CD4-positive, alpha-beta memory T cell (primary cell): ENCODE measurements at regions of chr6 and their contacts with region 1.

Region 1: GRCh38 chr6:16514249-16514648 is 247.0 kb downstream of the ATXN1 start:
- DNase-seq: peak in 4 of 5 donors; percentile 39 to 48 (median 42)
- H3K4me3 ChIP-seq: no peak overlapping the region
- H3K4me3 Mint-ChIP-seq: peak overlapping the region in 4 of 8 donors; percentile 22 to 65 (median 34)
- H3K27ac ChIP-seq: no peak overlapping the region
- H3K27ac Mint-ChIP-seq: peak overlapping the region; percentile 49 to 95 (median 85)
- H3K4me1 ChIP-seq: peaks cover 54% of the 10 kb centered on the region
- H3K4me1 Mint-ChIP-seq: peaks cover 53 to 73% (median 65%) of the 10 kb centered on the region in 4 donors
- H3K27me3 ChIP-seq: no peaks in the 10 kb centered on the region
- H3K27me3 Mint-ChIP-seq: no peaks in the 10 kb centered on the region

Region 2: GRCh38 chr6:16257999-16258708 is 256.1 kb before region 1 on chr6:
- CTCF ChIA-PET with region 1: no interaction called
- POLR2A ChIA-PET with region 1: no interaction called
- intact Hi-C with region 1: no loop called
- DNase-seq: no peak
- H3K4me3 ChIP-seq: no peak overlapping the region
- H3K4me3 Mint-ChIP-seq: no peak overlapping the region
- H3K27ac ChIP-seq: no peak overlapping the region
- H3K27ac Mint-ChIP-seq: no peak overlapping the region
- H3K4me1 ChIP-seq: no peaks in the 10 kb centered on the region
- H3K4me1 Mint-ChIP-seq: no peaks in the 10 kb centered on the region
- H3K27me3 ChIP-seq: no peaks in the 10 kb centered on the region
- H3K27me3 Mint-ChIP-seq: peaks cover 1 to 3% of the 10 kb centered on the region in 2 donors

Region 3: DNA sequence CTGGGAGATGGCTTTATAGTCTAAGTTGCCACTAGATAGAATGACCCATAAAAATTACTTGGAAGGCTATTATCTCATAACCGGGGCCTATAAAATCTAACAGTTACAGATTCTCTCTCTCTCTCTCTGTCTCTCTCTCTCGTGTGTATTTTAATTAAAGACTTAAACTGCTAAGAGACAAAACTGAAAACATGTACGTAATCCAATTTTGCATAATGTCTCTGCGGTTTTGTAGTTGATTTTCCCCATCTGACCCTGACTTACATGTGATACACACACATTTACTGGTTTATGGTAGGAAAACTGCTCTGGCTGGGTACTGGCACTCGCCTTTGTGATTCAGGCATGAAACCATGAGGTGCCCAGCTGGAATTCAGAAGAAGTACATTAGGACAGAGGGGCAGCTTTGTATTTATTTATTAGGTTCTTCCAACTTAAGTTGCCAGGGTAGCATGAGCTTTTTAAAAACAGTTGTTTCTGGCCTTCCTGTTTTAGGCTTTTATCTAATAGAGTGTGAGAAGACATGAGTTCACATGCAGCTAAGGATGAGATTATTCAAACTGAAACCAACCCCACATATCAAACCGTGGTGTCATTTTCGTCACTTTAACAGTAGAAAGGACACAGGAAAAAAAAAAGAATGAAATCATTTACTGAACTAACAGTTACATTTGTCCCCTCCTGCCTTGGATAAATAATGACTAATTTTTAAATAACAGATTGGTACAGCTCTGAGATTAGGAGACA is 93.4 kb before region 1 on chr6:
- CTCF ChIA-PET with region 1: interaction called, 11 read pairs
- POLR2A ChIA-PET with region 1: no interaction called
- intact Hi-C with region 1: no loop called
- DNase-seq: peak; percentile 75 to 86 (median 76)
- H3K4me3 ChIP-seq: peak overlapping the region; percentile 24 to 32
- H3K4me3 Mint-ChIP-seq: peak overlapping the region; percentile 73 to 92 (median 84)
- H3K27ac ChIP-seq: peak overlapping the region; percentile 69
- H3K27ac Mint-ChIP-seq: peak overlapping the region; percentile 92 to 99 (median 99)
- H3K4me1 ChIP-seq: peaks cover 53% of the 10 kb centered on the region
- H3K4me1 Mint-ChIP-seq: peaks cover 55 to 72% (median 60%) of the 10 kb centered on the region in 4 donors
- H3K27me3 ChIP-seq: no peaks in the 10 kb centered on the region
- H3K27me3 Mint-ChIP-seq: no peaks in the 10 kb centered on the region

Region 4: DNA sequence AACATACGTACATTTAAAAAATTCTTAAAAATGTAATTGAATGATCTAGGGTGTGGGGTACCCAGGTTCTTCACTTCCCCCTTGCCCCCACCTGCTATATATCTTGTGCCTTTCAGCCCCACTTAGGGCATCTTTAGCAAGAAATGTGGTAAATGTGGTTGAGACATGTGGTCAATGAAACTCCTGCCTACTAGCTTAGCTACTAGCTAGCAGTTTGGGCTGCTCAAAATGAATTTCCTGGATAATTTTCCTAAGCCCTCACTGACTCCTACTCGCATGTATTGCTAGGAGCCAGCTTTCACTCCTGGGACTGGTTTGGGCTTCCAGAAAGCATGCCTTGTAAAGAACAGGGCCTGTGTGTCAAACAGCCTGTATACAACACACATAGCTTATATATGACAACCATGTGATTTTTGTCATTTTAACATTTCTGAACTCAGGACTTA is 10.3 kb before region 1 on chr6:
- CTCF ChIA-PET with region 1: interaction called, 22 read pairs
- POLR2A ChIA-PET with region 1: interaction called, 4 read pairs
- intact Hi-C with region 1: no loop called
- DNase-seq: peak in 3 of 5 donors; percentile 18 to 32 (median 24)
- H3K4me3 ChIP-seq: no peak overlapping the region
- H3K4me3 Mint-ChIP-seq: peak overlapping the region in 5 of 8 donors; percentile 31 to 65 (median 49)
- H3K27ac ChIP-seq: no peak overlapping the region
- H3K27ac Mint-ChIP-seq: peak overlapping the region in 6 of 7 donors; percentile 3 to 77 (median 24)
- H3K4me1 ChIP-seq: peaks cover 22% of the 10 kb centered on the region
- H3K4me1 Mint-ChIP-seq: peaks cover 22 to 36% (median 30%) of the 10 kb centered on the region in 4 donors
- H3K27me3 ChIP-seq: no peaks in the 10 kb centered on the region
- H3K27me3 Mint-ChIP-seq: no peaks in the 10 kb centered on the region

Region 5: GRCh38 chr6:16704401-16705045 is 190.3 kb after region 1 on chr6:
- CTCF ChIA-PET with region 1: interaction called, 23 read pairs
- POLR2A ChIA-PET with region 1: interaction called, 6 read pairs
- intact Hi-C with region 1: no loop called
- DNase-seq: peak in 1 of 5 donors; percentile 66
- H3K4me3 ChIP-seq: peak overlapping the region; percentile 36 to 42
- H3K4me3 Mint-ChIP-seq: peak overlapping the region; percentile 78 to 91 (median 82)
- H3K27ac ChIP-seq: peak overlapping the region; percentile 12
- H3K27ac Mint-ChIP-seq: peak overlapping the region; percentile 81 to 93 (median 84)
- H3K4me1 ChIP-seq: peaks cover 63% of the 10 kb centered on the region
- H3K4me1 Mint-ChIP-seq: peaks cover 53 to 87% (median 63%) of the 10 kb centered on the region in 4 donors
- H3K27me3 ChIP-seq: no peaks in the 10 kb centered on the region
- H3K27me3 Mint-ChIP-seq: no peaks in the 10 kb centered on the region

Region 6: GRCh38 chr6:16741112-16742016 is 227.1 kb after region 1 on chr6:
- CTCF ChIA-PET with region 1: interaction called, 12 read pairs
- POLR2A ChIA-PET with region 1: interaction called, 3 read pairs
- intact Hi-C with region 1: no loop called
- DNase-seq: no peak
- H3K4me3 ChIP-seq: no peak overlapping the region
- H3K4me3 Mint-ChIP-seq: peak overlapping the region in 2 of 8 donors; percentile 20 to 23
- H3K27ac ChIP-seq: no peak overlapping the region
- H3K27ac Mint-ChIP-seq: peak overlapping the region; percentile 19 to 90 (median 52)
- H3K4me1 ChIP-seq: peaks cover 72% of the 10 kb centered on the region
- H3K4me1 Mint-ChIP-seq: peaks cover 57 to 97% (median 78%) of the 10 kb centered on the region in 4 donors
- H3K27me3 ChIP-seq: no peaks in the 10 kb centered on the region
- H3K27me3 Mint-ChIP-seq: no peaks in the 10 kb centered on the region